Dorsolateral prefrontal cortex (tissue), 120 donors: ENCODE measurements at regions of chr6 and their contacts with region 1.

Region 1: GRCh38 chr6:138211027-138211581 is 7.2 kb downstream of the PBOV1 start:
- DNase-seq: peak in 2 of 10 donors; percentile 52 to 61
- H3K4me3 ChIP-seq: no peak overlapping the region
- H3K27ac ChIP-seq: peak overlapping the region in 54 of 59 donors; percentile 2 to 90 (median 68)
- H3K27me3 ChIP-seq: no peaks in the 10 kb centered on the region
- CTCF ChIP-seq: peak in 55 of 56 donors; percentile 31 to 87 (median 59)

Region 2: GRCh38 chr6:138161338-138162110 is 49.6 kb before region 1 on chr6 and contains the start of gene ARFGEF3:
- intact Hi-C with region 1: loop called in 1 of 2 experiments (anchors 2 kb)
- DNase-seq: peak in 9 of 10 donors; percentile 41 to 84 (median 64)
- H3K4me3 ChIP-seq: peak within 1 kb of the TSS; percentile 67 to 95 (median 85)
- H3K27ac ChIP-seq: peak within 1 kb of the TSS; percentile 79 to 98 (median 95)
- H3K27me3 ChIP-seq: no peaks in the 10 kb centered on the region
- CTCF ChIP-seq: peak in 4 of 56 donors; percentile 3 to 38 (median 16)
- total RNA-seq, gene ARFGEF3: 30.0 to 93.7 (median 67.0) TPM

Region 3: DNA sequence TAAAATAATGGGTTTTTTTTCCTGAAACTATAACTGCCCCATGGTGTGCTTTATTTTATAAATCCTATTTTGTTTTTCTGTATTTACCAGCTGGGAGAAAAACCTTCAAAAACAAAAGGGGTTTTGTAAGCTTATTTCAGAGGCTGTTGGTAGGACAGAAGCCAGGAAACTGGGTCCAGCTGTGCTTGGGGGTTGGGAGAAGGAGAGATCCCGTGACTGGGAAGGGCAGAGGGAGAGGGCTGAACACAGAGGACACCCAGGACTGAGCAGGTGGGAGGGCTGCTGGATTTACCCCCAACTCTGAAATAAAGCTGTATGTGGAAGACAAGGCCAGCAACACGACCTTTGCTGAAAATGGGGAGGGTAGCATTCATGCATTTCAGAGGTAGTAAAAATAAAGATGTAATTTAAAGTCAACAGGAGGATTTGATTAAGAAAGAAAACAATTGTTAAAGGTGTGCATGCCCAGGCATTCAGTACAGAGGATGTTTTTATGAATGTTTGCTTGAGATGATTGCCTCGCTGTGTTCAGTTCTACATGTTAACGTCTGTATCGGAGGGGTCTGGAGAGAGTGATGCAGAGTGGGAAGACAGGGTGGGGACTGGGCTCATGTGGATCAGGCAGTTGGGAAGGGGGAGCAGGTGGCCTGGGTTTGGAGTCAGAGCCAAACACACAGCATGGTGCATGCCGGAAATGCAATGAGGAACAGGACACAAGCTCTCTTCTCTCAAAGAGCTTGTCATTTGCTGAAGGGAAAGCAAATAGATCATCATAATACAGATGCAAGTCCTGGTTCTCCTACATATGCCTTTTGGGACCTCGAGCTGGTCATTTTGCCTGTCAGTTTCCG is 27.9 kb before region 1 on chr6:
- intact Hi-C with region 1: loop called in 1 of 2 experiments (anchors 2 kb)
- DNase-seq: peak; percentile 43 to 90 (median 80)
- H3K4me3 ChIP-seq: peak overlapping the region in 47 of 59 donors; percentile 0 to 57 (median 26)
- H3K27ac ChIP-seq: peak overlapping the region; percentile 76 to 98 (median 94)
- H3K27me3 ChIP-seq: no peaks in the 10 kb centered on the region
- CTCF ChIP-seq: peak in 3 of 56 donors; percentile 9 to 24 (median 15)